ENCODE measurements at regions of chr18 and their contacts with region 1.

Region 1: GRCh38 chr18:48030616-48031480 is 100.4 kb upstream of the SMAD2 start:
- DNase-seq: peak in 2 of 3 donors; percentile 39 to 74
- ATAC-seq: peak; percentile 90 to 95 (median 94)
- H3K4me3 ChIP-seq: no peak overlapping the region
- H3K27ac ChIP-seq: no peak overlapping the region
- H3K4me1 ChIP-seq: no peaks in the 10 kb centered on the region
- H3K27me3 ChIP-seq: no peaks in the 10 kb centered on the region
- CTCF ChIP-seq: peak; percentile 68 to 85 (median 83)
- POLR2A ChIP-seq: no peak

Region 2: DNA sequence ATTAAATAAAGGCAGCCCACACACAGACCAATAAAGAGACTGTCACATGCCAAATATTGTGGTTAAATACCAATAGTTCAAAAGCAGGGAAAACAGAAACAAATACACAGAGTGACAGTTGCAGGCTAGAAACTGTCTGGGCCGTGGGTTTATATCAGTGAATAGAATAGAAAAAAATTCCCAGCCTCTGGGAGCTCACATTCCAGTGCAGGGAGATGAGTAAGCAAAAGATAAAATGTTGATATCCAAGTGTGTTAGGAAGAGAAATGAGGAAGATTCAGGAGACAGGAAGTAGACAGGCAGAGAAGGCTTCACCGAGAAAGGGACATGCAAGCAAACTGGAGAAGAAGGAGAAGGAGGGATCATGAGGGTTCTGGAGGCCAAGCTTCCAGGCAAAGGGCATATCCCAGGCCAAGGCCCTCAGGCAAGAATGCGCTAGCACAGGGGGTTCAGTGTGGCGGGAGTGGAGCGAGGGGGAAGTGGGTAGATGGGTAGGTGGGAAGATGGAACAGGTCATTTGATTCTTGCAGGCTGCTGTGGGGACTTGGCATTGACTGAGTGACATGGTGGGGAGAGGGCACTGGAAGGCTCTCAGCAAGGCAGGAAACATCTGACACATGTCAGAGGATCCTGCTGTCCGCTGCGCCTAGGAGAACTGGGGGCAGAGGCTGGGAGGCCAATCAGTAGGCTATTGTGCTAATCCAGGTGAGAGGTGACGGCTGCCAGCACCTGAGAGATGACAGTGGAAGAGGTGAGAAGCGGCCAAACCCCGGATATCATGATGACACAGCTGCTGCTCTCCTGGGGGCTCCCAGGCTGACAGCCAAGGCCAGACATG is 289.2 kb after region 1 on chr18:
- intact Hi-C with region 1: loop called in 1 of 2 experiments (anchors 10 kb)
- DNase-seq: peak in 1 of 3 donors; percentile 35
- ATAC-seq: peak; percentile 27 to 36 (median 29)
- H3K4me3 ChIP-seq: no peak overlapping the region
- H3K27ac ChIP-seq: no peak overlapping the region
- H3K4me1 ChIP-seq: no peaks in the 10 kb centered on the region
- H3K27me3 ChIP-seq: no peaks in the 10 kb centered on the region
- CTCF ChIP-seq: no peak
- POLR2A ChIP-seq: no peak

Region 3: GRCh38 chr18:48345596-48345995 is 314.7 kb after region 1 on chr18:
- intact Hi-C with region 1: loop called in 1 of 2 experiments (anchors 10 kb)
- DNase-seq: peak in 1 of 3 donors; percentile 37
- ATAC-seq: peak; percentile 29 to 58 (median 48)
- H3K4me3 ChIP-seq: no peak overlapping the region
- H3K27ac ChIP-seq: no peak overlapping the region
- H3K4me1 ChIP-seq: no peaks in the 10 kb centered on the region
- H3K27me3 ChIP-seq: no peaks in the 10 kb centered on the region
- CTCF ChIP-seq: peak; percentile 34 to 51 (median 40)
- POLR2A ChIP-seq: no peak

Region 4: DNA sequence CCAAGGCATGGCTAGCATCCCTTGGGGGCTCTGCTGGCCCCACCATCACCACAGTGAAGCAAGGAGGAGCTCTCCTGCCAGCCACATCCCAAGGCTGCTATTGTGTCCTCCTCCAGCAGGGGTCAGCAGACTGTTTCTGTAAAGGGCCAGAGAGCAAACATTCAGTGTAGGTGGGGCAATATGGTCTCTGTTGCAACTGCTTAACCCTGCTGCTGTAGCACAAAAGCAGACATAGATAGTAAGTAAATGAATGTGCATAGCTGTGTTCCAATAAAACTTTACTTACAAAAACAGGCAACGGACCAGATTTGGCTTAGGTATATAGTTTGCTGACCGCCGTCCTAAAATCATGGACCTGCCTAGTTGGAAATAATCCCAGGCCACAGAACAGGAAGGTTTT is 414.7 kb after region 1 on chr18:
- intact Hi-C with region 1: loop called (anchors 5 kb)
- DNase-seq: peak; percentile 60 to 83 (median 75)
- ATAC-seq: peak; percentile 93 to 97 (median 94)
- H3K4me3 ChIP-seq: no peak overlapping the region
- H3K27ac ChIP-seq: no peak overlapping the region
- H3K4me1 ChIP-seq: peaks cover 0 to 3% (median 0%) of the 10 kb centered on the region in 4 donors
- H3K27me3 ChIP-seq: no peaks in the 10 kb centered on the region
- CTCF ChIP-seq: peak; percentile 90 to 97 (median 94)
- POLR2A ChIP-seq: no peak

Measured in right lobe of liver (tissue), 6 donors.